ENCODE measurements at regions of chr18 and their contacts with region 1.

Region 1: GRCh38 chr18:62425465-62426195 is 97.2 kb upstream of the ZCCHC2 start:
- DNase-seq: peak; percentile 55 to 72
- H3K4me3 ChIP-seq: peak overlapping the region; percentile 30
- H3K4me3 Mint-ChIP-seq: peak overlapping the region; percentile 66
- H3K27ac Mint-ChIP-seq: no peak overlapping the region
- H3K4me1 ChIP-seq: no peaks in the 10 kb centered on the region
- H3K4me1 Mint-ChIP-seq: peaks cover 22% of the 10 kb centered on the region
- H3K27me3 ChIP-seq: no peaks in the 10 kb centered on the region
- H3K27me3 Mint-ChIP-seq: peaks cover 2% of the 10 kb centered on the region
- CTCF ChIP-seq: peak; percentile 37 to 44

Region 2: DNA sequence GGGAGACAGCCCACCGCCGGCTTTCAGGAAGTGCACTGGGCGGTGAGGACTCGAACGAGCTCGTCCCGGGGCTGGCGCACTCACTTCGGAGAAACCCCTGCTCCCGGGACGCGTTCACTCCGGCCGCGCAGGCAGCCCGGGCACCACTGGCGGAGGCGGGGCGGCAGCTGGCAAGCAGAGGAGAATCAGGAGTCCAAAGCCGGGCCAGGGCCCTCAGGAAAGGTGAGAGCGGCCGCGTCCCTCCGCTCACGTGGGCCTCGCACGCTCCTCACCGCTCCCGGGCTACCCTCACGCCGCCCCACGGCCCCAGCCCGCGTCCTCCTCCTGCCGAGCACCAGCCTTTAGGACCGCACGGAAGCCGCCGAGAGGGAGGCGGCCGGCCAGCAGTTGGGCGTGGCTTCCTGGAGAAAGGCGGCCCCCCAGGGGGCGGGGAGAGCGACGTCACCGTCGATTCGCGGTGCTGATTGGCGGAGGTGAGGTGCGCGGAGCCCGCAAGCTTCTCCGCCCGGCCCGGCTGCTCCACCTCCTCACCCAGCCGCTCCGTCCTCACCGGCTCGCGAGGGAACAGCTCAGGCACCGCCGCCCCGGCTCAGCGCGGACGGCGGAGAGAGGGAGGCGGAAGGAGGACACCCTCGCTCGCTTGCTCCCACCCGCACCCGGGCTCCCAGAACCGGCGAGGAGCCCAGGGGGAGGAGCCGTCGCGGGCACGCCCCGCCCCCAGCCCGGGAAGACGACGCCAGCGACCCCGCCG is 97.0 kb after region 1 on chr18 and contains the start of gene ZCCHC2:
- CTCF ChIA-PET with region 1: interaction called, 6 read pairs
- POLR2A ChIA-PET with region 1: no interaction called
- intact Hi-C with region 1: loop called (anchors 1 kb)
- DNase-seq: peak; percentile 93 to 95
- H3K4me3 ChIP-seq: peak within 1 kb of the TSS; percentile 69
- H3K4me3 Mint-ChIP-seq: peak within 1 kb of the TSS; percentile 76
- H3K27ac Mint-ChIP-seq: no peak within 1 kb of the TSS
- H3K4me1 ChIP-seq: peaks cover 10% of the 10 kb centered on the region
- H3K4me1 Mint-ChIP-seq: no peaks in the 10 kb centered on the region
- H3K27me3 ChIP-seq: no peaks in the 10 kb centered on the region
- H3K27me3 Mint-ChIP-seq: no peaks in the 10 kb centered on the region
- CTCF ChIP-seq: no peak
- total RNA-seq, gene ZCCHC2: 6.9 and 8.9 TPM in 2 replicates

Region 3: DNA sequence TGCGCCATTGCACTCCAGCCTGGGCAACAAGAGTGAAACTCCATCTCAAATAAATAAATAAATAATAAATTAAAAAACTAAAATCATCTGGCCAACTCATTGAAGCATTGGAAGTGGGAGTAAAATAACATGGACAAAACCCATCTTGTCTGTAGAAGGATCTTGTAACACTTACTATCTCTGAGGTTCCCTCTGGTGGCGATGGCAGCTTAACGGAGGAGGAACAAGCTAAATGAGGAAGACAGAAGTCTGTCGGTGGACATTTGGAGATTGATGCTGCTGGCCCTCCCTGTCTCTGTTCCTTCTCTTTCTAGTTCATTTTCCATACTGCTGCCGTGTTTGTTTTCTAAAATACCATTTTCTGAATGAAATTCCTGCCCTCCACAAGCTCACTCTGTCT is 140.6 kb after region 1 on chr18:
- CTCF ChIA-PET with region 1: interaction called, 3 read pairs
- POLR2A ChIA-PET with region 1: no interaction called
- intact Hi-C with region 1: loop called (anchors 1 kb)
- DNase-seq: peak; percentile 23 to 29
- H3K4me3 ChIP-seq: no peak overlapping the region
- H3K4me3 Mint-ChIP-seq: no peak overlapping the region
- H3K27ac Mint-ChIP-seq: no peak overlapping the region
- H3K4me1 ChIP-seq: no peaks in the 10 kb centered on the region
- H3K4me1 Mint-ChIP-seq: no peaks in the 10 kb centered on the region
- H3K27me3 ChIP-seq: no peaks in the 10 kb centered on the region
- H3K27me3 Mint-ChIP-seq: no peaks in the 10 kb centered on the region
- CTCF ChIP-seq: peak in 1 of 2 experiments; percentile 4

Region 4: GRCh38 chr18:62584241-62585120 is 158.9 kb after region 1 on chr18:
- CTCF ChIA-PET with region 1: interaction called, 5 read pairs
- POLR2A ChIA-PET with region 1: no interaction called
- intact Hi-C with region 1: loop called (anchors 1 kb)
- DNase-seq: peak; percentile 72 to 76
- H3K4me3 ChIP-seq: no peak overlapping the region
- H3K4me3 Mint-ChIP-seq: peak overlapping the region; percentile 48
- H3K27ac Mint-ChIP-seq: no peak overlapping the region
- H3K4me1 ChIP-seq: no peaks in the 10 kb centered on the region
- H3K4me1 Mint-ChIP-seq: peaks cover 7% of the 10 kb centered on the region
- H3K27me3 ChIP-seq: no peaks in the 10 kb centered on the region
- H3K27me3 Mint-ChIP-seq: no peaks in the 10 kb centered on the region
- CTCF ChIP-seq: peak; percentile 81 to 87